ENCODE measurements at regions of chrX and their contacts with region 1.

Region 1: GRCh38 chrX:107776649-107777535 is 641 bp upstream of the NCBP2L start:
- DNase-seq: peak; percentile 50 to 90 (median 66)
- ATAC-seq: peak; percentile 69
- H3K4me3 ChIP-seq: peak overlapping the region; percentile 72
- H3K4me3 Mint-ChIP-seq: peak overlapping the region; percentile 87
- H3K27ac ChIP-seq: peak overlapping the region in 1 of 2 donors; percentile 60
- H3K27ac Mint-ChIP-seq: peak overlapping the region; percentile 80
- H3K4me1 ChIP-seq: peaks cover 20% of the 10 kb centered on the region
- H3K4me1 Mint-ChIP-seq: peaks cover 23% of the 10 kb centered on the region
- H3K27me3 ChIP-seq: no peaks in the 10 kb centered on the region
- H3K27me3 Mint-ChIP-seq: no peaks in the 10 kb centered on the region
- CTCF ChIP-seq: peak; percentile 47

Region 2: DNA sequence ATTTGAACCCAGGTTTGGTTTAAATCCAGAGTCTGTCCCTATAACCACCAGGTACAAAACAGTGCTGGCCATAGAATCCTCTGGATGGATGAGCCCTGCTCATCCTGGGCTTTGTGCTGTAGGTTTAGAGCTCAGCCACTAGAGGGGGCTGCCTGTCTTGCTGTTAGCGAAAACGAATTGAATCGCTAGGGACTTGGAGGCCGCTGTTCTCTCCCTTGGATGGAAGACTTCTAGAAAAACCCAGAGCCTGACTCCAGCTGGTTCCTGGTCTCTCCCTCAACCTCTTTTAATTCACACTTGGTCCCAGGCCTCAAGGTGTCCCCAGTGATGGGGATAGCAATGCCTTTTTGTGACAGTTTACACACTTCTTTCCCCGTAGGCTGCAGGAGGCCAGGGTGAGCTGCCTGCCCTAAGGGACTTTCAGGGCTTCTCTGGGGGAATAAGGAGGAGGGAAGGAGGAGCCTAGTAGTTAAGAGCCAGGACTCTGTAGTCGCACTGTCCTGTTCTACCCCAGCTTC is 882.4 kb before region 1 on chrX:
- CTCF ChIA-PET with region 1: no interaction called
- POLR2A ChIA-PET with region 1: no interaction called
- intact Hi-C with region 1: loop called in 1 of 2 experiments (anchors 5 kb)
- DNase-seq: peak; percentile 12 to 67 (median 26)
- ATAC-seq: peak; percentile 62
- H3K4me3 ChIP-seq: no peak overlapping the region
- H3K4me3 Mint-ChIP-seq: no peak overlapping the region
- H3K27ac ChIP-seq: no peak overlapping the region
- H3K27ac Mint-ChIP-seq: no peak overlapping the region
- H3K4me1 ChIP-seq: no peaks in the 10 kb centered on the region
- H3K4me1 Mint-ChIP-seq: no peaks in the 10 kb centered on the region
- H3K27me3 ChIP-seq: peaks cover 0 to 3% of the 10 kb centered on the region in 2 experiments
- H3K27me3 Mint-ChIP-seq: peaks cover 21% of the 10 kb centered on the region
- CTCF ChIP-seq: peak; percentile 54

Region 3: DNA sequence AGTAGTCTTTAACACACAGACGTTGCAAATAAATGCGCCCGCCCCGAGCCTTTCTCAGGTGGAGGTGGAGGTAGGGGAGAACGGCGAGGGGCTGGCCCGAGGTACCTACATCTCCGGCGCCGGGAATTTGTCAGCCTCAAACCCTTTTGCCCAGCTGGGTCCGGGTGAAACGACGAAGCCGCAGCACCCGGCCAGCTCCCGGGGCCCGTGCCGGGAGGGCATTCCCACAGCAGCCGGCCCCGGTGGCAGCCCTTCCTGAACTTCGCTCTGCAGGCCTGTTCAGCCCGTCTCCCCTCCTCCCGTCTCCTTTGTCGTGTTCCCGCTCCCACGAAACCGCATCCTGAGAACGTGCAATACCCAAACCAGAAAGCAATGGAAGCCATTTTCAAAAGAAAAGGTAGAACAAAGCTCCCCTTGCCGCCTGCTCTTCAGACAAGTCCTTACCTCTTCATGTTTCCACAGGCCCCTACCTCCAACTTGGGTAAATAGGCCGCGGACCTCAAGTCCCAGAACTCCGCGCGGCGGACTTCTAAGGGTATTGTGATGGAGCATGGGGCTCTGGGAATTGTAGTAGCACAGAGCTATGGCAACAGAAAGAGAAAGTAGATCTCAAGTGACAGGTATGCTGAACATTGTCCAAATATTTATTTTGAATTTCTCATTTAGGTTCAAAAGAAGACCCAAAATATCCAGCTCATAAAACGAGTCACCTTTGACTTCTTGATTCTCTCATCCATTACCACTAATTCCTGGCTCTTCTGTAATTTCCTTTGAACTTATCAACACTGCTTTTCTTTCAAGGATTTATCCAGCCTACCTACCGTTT is 658.4 kb before region 1 on chrX and contains the start of gene RBM41:
- CTCF ChIA-PET with region 1: no interaction called
- POLR2A ChIA-PET with region 1: no interaction called
- intact Hi-C with region 1: loop called in 1 of 2 experiments (anchors 10 kb)
- DNase-seq: peak; percentile 45 to 88 (median 66)
- ATAC-seq: peak; percentile 99
- H3K4me3 ChIP-seq: peak within 1 kb of the TSS; percentile 77
- H3K4me3 Mint-ChIP-seq: peak within 1 kb of the TSS; percentile 100
- H3K27ac ChIP-seq: peak within 1 kb of the TSS; percentile 54 to 55
- H3K27ac Mint-ChIP-seq: peak within 1 kb of the TSS; percentile 91
- H3K4me1 ChIP-seq: no peaks in the 10 kb centered on the region
- H3K4me1 Mint-ChIP-seq: peaks cover 49% of the 10 kb centered on the region
- H3K27me3 ChIP-seq: no peaks in the 10 kb centered on the region
- H3K27me3 Mint-ChIP-seq: no peaks in the 10 kb centered on the region
- CTCF ChIP-seq: no peak
- total RNA-seq, gene RBM41: 5.9 to 8.2 TPM

Region 4: GRCh38 chrX:107448998-107449835 is 327.7 kb before region 1 on chrX and contains the start of gene FRMPD3:
- CTCF ChIA-PET with region 1: no interaction called
- POLR2A ChIA-PET with region 1: no interaction called
- intact Hi-C with region 1: no loop called
- DNase-seq: peak in 2 of 14 experiments; percentile 13 to 17
- ATAC-seq: no peak
- H3K4me3 ChIP-seq: peak within 1 kb of the TSS; percentile 30
- H3K4me3 Mint-ChIP-seq: peak within 1 kb of the TSS; percentile 70
- H3K27ac ChIP-seq: no peak within 1 kb of the TSS
- H3K27ac Mint-ChIP-seq: no peak within 1 kb of the TSS
- H3K4me1 ChIP-seq: peaks cover 17% of the 10 kb centered on the region
- H3K4me1 Mint-ChIP-seq: peaks cover 11% of the 10 kb centered on the region
- H3K27me3 ChIP-seq: peaks cover 10 to 27% of the 10 kb centered on the region in 2 experiments
- H3K27me3 Mint-ChIP-seq: peaks cover 65% of the 10 kb centered on the region
- CTCF ChIP-seq: no peak
- total RNA-seq, gene FRMPD3: 0.06 TPM in 1 of 2 experiments, not detected in the other

Region 5: GRCh38 chrX:107627838-107628661 is 148.8 kb before region 1 on chrX and contains the start of gene PRPS1:
- CTCF ChIA-PET with region 1: interaction called, 3 read pairs
- POLR2A ChIA-PET with region 1: interaction called, 18 read pairs
- intact Hi-C with region 1: no loop called
- DNase-seq: peak; percentile 72 to 96 (median 82)
- ATAC-seq: peak; percentile 96
- H3K4me3 ChIP-seq: peak within 1 kb of the TSS; percentile 85
- H3K4me3 Mint-ChIP-seq: peak within 1 kb of the TSS; percentile 97
- H3K27ac ChIP-seq: peak within 1 kb of the TSS; percentile 70 to 83
- H3K27ac Mint-ChIP-seq: peak within 1 kb of the TSS; percentile 89
- H3K4me1 ChIP-seq: peaks cover 8% of the 10 kb centered on the region
- H3K4me1 Mint-ChIP-seq: peaks cover 46% of the 10 kb centered on the region
- H3K27me3 ChIP-seq: no peaks in the 10 kb centered on the region
- H3K27me3 Mint-ChIP-seq: no peaks in the 10 kb centered on the region
- CTCF ChIP-seq: no peak
- total RNA-seq, gene PRPS1: 66.5 to 70.4 TPM

Region 6: DNA sequence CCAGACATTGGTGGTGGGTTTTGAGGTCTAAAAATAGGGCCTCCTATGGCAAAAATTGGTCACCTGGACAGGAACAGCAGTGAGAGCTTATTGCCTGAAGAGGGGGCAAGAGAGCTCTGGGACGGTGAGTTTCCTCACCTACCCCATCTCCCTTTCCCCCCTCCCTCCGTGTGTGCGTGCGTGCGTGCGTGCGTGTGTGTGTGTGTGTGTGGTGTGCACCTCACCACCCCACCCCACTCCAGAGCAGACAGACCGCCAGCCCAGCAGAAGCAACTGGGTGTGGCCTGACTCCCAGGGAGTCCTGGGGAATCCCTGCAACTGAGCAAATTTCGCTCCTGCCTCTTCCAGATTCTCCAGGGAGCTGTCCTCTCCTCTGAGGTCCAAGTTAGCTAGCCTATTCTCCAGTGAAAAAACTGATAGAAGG is 103.9 kb before region 1 on chrX:
- CTCF ChIA-PET with region 1: interaction called, 57 read pairs
- POLR2A ChIA-PET with region 1: interaction called, 66 read pairs
- intact Hi-C with region 1: loop called in 1 of 2 experiments (anchors 1 kb)
- DNase-seq: peak; percentile 67 to 94 (median 78)
- ATAC-seq: peak; percentile 45
- H3K4me3 ChIP-seq: peak overlapping the region; percentile 33
- H3K4me3 Mint-ChIP-seq: peak overlapping the region; percentile 87
- H3K27ac ChIP-seq: peak overlapping the region; percentile 97 to 98
- H3K27ac Mint-ChIP-seq: peak overlapping the region; percentile 99
- H3K4me1 ChIP-seq: peaks cover 59% of the 10 kb centered on the region
- H3K4me1 Mint-ChIP-seq: peaks cover 51% of the 10 kb centered on the region
- H3K27me3 ChIP-seq: no peaks in the 10 kb centered on the region
- H3K27me3 Mint-ChIP-seq: no peaks in the 10 kb centered on the region
- CTCF ChIP-seq: peak; percentile 58

Region 7: DNA sequence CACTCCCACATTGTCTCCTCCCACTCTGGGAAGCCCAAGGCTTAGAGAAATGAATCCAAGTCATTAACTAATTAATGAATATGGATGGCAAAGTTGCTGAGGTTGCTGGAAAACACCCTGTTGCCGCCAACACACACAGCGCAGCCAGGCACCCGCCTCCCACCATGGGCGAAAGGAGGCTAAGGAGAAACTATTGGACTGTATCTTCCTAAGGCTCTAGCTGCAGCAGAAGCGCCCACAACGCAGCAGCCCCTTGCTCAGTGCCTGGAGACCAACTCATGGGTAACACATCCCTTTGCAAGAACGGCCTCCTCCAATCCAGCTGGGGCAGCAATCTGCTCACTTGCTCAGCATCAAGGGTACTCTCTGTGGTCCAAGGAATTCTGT is 35.5 kb before region 1 on chrX:
- CTCF ChIA-PET with region 1: interaction called, 5 read pairs
- POLR2A ChIA-PET with region 1: interaction called, 54 read pairs
- intact Hi-C with region 1: loop called in 1 of 2 experiments (anchors 2 kb)
- DNase-seq: peak in 2 of 14 experiments; percentile 3 to 5
- ATAC-seq: peak; percentile 10
- H3K4me3 ChIP-seq: peak overlapping the region; percentile 17
- H3K4me3 Mint-ChIP-seq: peak overlapping the region; percentile 88
- H3K27ac ChIP-seq: peak overlapping the region; percentile 46 to 82
- H3K27ac Mint-ChIP-seq: peak overlapping the region; percentile 98
- H3K4me1 ChIP-seq: peaks cover 61% of the 10 kb centered on the region
- H3K4me1 Mint-ChIP-seq: peaks cover 47% of the 10 kb centered on the region
- H3K27me3 ChIP-seq: no peaks in the 10 kb centered on the region
- H3K27me3 Mint-ChIP-seq: peaks cover 7% of the 10 kb centered on the region
- CTCF ChIP-seq: no peak

Region 8: GRCh38 chrX:107894038-107894437 is 117.1 kb after region 1 on chrX:
- CTCF ChIA-PET with region 1: interaction called, 5 read pairs
- POLR2A ChIA-PET with region 1: no interaction called
- intact Hi-C with region 1: loop called in 1 of 2 experiments (anchors 5 kb)
- DNase-seq: peak in 6 of 14 experiments; percentile 1 to 73 (median 54)
- ATAC-seq: peak; percentile 76
- H3K4me3 ChIP-seq: no peak overlapping the region
- H3K4me3 Mint-ChIP-seq: no peak overlapping the region
- H3K27ac ChIP-seq: no peak overlapping the region
- H3K27ac Mint-ChIP-seq: no peak overlapping the region
- H3K4me1 ChIP-seq: no peaks in the 10 kb centered on the region
- H3K4me1 Mint-ChIP-seq: no peaks in the 10 kb centered on the region
- H3K27me3 ChIP-seq: no peaks in the 10 kb centered on the region
- H3K27me3 Mint-ChIP-seq: no peaks in the 10 kb centered on the region
- CTCF ChIP-seq: peak; percentile 69

Region 9: DNA sequence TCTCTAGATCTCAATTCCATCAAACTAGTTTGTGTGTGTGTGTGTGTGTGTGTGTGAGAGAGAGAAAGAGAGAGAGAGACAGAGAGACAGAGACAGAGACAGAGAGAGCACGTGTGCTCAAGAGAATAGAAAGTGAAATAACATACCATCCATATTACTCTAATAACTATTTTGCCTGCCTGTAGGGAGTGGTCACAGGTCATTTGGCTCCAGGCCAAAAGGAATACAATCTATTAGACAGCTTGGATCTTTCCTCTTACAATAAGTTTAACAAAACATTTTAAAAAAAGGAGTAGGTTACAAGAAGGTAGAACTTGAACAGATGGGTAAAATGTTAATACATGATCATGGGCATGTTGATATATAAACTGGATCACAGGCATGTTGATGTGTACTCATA is 585.1 kb after region 1 on chrX:
- CTCF ChIA-PET with region 1: no interaction called
- POLR2A ChIA-PET with region 1: no interaction called
- intact Hi-C with region 1: no loop called
- DNase-seq: no peak
- ATAC-seq: no peak
- H3K4me3 ChIP-seq: no peak overlapping the region
- H3K4me3 Mint-ChIP-seq: no peak overlapping the region
- H3K27ac ChIP-seq: no peak overlapping the region
- H3K27ac Mint-ChIP-seq: no peak overlapping the region
- H3K4me1 ChIP-seq: no peaks in the 10 kb centered on the region
- H3K4me1 Mint-ChIP-seq: no peaks in the 10 kb centered on the region
- H3K27me3 ChIP-seq: no peaks in the 10 kb centered on the region
- H3K27me3 Mint-ChIP-seq: peaks cover 5% of the 10 kb centered on the region
- CTCF ChIP-seq: no peak